ENCODE measurements at regions of chr12 and their contacts with region 1.

Region 1: GRCh38 chr12:68231229-68231628 is 5.6 kb upstream of the IL26 start:
- DNase-seq: no peak
- ATAC-seq: peak; percentile 70
- H3K4me3 ChIP-seq: no peak overlapping the region
- H3K27ac ChIP-seq: no peak overlapping the region
- H3K4me1 ChIP-seq: peaks cover 2% of the 10 kb centered on the region; the same call in 1 of the 2 replicates
- H3K27me3 ChIP-seq: no peaks in the 10 kb centered on the region
- CTCF ChIP-seq: no peak
- EP300 ChIP-seq: no peak
- POLR2A ChIP-seq: no peak
- RAD21 ChIP-seq: no peak

Region 2: GRCh38 chr12:68310370-68310769 is 79.1 kb after region 1 on chr12:
- CTCF ChIA-PET with region 1: interaction called, 189 read pairs
- POLR2A ChIA-PET with region 1: interaction called, 4 read pairs
- RAD21 ChIA-PET with region 1: interaction called, 72 read pairs
- SMC1A ChIA-PET with region 1: interaction called, 147 read pairs
- in situ Hi-C with region 1: loop called (anchors 5 kb)
- intact Hi-C with region 1: no loop called
- DNase-seq: no peak
- ATAC-seq: no peak
- H3K4me3 ChIP-seq: no peak overlapping the region
- H3K27ac ChIP-seq: no peak overlapping the region
- H3K4me1 ChIP-seq: no peaks in the 10 kb centered on the region
- H3K27me3 ChIP-seq: no peaks in the 10 kb centered on the region
- CTCF ChIP-seq: no peak
- EP300 ChIP-seq: no peak
- POLR2A ChIP-seq: no peak
- RAD21 ChIP-seq: no peak